AG04449 (cell line): ENCODE measurements at regions of chr14 and their contacts with region 1.

Region 1: DNA sequence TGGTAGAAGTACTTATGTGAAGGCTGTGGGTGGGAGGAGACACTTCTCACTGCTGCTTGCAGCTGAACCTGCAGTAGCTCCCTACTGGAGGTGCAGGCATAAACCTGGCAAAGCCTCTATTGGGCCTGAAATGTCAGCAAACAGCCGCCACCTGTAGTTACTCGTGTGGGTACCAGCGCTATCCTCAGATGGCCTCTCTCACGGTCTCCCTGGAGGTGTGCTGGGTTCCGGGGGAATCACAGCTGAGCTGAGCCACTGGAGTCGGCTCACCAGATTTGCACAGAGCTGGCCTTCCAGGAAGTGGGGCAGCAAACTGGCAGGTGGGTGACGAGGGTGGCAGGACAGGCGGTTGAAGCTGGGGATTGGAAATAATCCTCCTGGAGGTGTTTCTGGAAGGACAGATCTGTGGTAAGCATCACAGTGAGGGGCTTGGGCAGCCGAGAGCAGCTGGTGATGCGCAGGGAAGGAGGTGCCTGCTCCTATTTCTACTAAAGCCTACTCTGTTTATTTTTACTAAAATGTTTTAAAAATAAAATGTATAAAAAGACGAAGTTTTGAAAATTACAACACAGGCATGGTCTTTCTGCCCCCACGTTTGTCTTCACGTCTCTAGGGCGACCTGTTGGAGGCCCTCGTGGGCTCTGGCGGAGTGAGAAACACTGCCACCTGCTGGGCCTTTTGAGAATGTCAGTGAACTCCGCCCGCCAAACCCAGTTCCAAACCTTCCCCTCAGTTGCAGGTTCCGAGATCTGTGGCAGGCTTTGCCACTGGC is 67.8 kb upstream of the PLEKHG3 start:
- DNase-seq: no peak
- H3K4me3 ChIP-seq: no peak overlapping the region
- CTCF ChIP-seq: peak; percentile 82

Region 2: GRCh38 chr14:64510825-64511671 is 125.3 kb before region 1 on chr14:
- CTCF ChIA-PET with region 1: interaction called, 36 read pairs
- POLR2A ChIA-PET with region 1: no interaction called
- DNase-seq: no peak
- H3K4me3 ChIP-seq: no peak overlapping the region
- CTCF ChIP-seq: peak; percentile 78

Region 3: GRCh38 chr14:64549781-64550620 is 86.4 kb before region 1 on chr14 and contains the start of gene PPP1R36:
- CTCF ChIA-PET with region 1: interaction called, 14 read pairs
- POLR2A ChIA-PET with region 1: interaction called, 3 read pairs
- DNase-seq: no peak
- H3K4me3 ChIP-seq: peak within 1 kb of the TSS; percentile 29; the same call in 1 of the 2 replicates
- CTCF ChIP-seq: no peak

Region 4: DNA sequence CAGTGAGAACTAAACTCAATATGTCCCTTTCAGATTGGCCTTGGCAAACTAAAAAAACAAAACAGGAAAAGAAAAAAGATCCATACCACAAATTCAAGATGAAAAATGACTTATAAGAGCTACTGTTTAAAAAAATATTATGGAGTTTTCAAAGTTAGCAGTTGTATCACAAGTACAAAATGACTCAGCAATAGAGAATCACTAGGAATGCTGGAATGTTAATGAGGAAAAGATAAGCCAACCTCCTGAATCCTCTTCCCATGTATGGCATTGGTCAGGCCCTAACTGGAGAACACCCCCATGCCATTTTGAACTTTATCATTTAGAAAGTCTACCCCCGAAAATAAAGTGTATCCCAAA is 24.4 kb before region 1 on chr14:
- CTCF ChIA-PET with region 1: interaction called, 38 read pairs
- POLR2A ChIA-PET with region 1: no interaction called
- DNase-seq: peak; percentile 63
- H3K4me3 ChIP-seq: no peak overlapping the region
- CTCF ChIP-seq: no peak

Region 5: GRCh38 chr14:64663174-64663573 is 26.8 kb after region 1 on chr14:
- CTCF ChIA-PET with region 1: interaction called, 10 read pairs
- POLR2A ChIA-PET with region 1: no interaction called
- DNase-seq: no peak
- H3K4me3 ChIP-seq: no peak overlapping the region
- CTCF ChIP-seq: no peak